Heart left ventricle (tissue), 16 donors: ENCODE measurements at regions of chr16 and their contacts with region 1.

Region 1: DNA sequence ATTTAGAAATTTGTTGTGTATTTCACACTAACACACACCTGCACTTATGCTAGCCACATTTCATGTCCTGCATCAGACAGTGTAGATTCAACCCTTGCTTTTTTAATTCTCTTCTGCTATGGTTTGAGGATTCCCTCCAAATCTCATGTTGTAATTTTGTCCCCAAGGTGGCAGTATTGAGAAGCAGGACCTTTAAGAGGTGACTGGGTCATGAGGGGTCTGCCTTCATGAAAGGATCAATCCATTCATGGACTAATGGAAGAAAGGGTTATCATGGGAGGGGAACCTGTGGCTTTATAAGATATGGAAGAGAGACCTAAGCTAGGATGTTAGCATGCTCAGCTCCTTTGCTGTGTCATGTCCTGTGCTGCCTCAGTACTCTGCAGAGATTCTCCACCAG is 1032.2 kb downstream of the CDH11 start:
- DNase-seq: no peak
- ATAC-seq: peak in 3 of 4 donors; percentile 39 to 41 (median 39)
- H3K4me3 ChIP-seq: no peak overlapping the region
- H3K27ac ChIP-seq: no peak overlapping the region
- H3K4me1 ChIP-seq: no peaks in the 10 kb centered on the region
- H3K27me3 ChIP-seq: no peaks in the 10 kb centered on the region
- CTCF ChIP-seq: peak; percentile 25 to 71 (median 54)
- POLR2A ChIP-seq: no peak

Region 2: DNA sequence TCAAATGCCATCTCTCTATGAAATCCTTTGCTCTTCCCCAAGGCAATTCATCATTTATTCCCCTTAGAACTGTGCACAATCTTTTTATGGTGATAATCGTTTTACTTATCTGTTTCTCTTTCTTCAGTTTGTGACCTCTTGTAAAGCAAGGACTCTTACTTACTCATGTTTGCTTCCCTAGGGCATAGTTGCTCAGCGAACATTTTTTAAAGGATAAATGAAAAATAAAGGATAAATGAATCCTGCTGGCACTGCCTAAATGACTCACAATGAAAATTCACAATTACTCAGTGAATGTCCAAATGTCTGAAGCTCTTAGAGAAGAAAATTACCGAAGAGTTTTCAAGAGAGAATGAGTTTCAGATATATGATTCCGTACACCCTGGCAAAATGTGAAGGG is 360.5 kb after region 1 on chr16:
- intact Hi-C with region 1: loop called in 8 of 10 experiments (anchors 2 to 10 kb)
- DNase-seq: no peak
- ATAC-seq: no peak
- H3K4me3 ChIP-seq: no peak overlapping the region
- H3K27ac ChIP-seq: no peak overlapping the region
- H3K4me1 ChIP-seq: peaks cover 0 to 6% (median 0%) of the 10 kb centered on the region in 12 donors
- H3K27me3 ChIP-seq: no peaks in the 10 kb centered on the region
- CTCF ChIP-seq: no peak
- POLR2A ChIP-seq: no peak

Region 3: GRCh38 chr16:64455254-64455653 is 365.6 kb after region 1 on chr16:
- intact Hi-C with region 1: loop called in 8 of 10 experiments (anchors 2 to 10 kb)
- DNase-seq: no peak
- ATAC-seq: no peak
- H3K4me3 ChIP-seq: no peak overlapping the region
- H3K27ac ChIP-seq: no peak overlapping the region
- H3K4me1 ChIP-seq: peaks cover 0 to 2% (median 0%) of the 10 kb centered on the region in 12 donors
- H3K27me3 ChIP-seq: no peaks in the 10 kb centered on the region
- CTCF ChIP-seq: peak in 9 of 12 donors; percentile 17 to 48 (median 39)
- POLR2A ChIP-seq: no peak

Region 4: DNA sequence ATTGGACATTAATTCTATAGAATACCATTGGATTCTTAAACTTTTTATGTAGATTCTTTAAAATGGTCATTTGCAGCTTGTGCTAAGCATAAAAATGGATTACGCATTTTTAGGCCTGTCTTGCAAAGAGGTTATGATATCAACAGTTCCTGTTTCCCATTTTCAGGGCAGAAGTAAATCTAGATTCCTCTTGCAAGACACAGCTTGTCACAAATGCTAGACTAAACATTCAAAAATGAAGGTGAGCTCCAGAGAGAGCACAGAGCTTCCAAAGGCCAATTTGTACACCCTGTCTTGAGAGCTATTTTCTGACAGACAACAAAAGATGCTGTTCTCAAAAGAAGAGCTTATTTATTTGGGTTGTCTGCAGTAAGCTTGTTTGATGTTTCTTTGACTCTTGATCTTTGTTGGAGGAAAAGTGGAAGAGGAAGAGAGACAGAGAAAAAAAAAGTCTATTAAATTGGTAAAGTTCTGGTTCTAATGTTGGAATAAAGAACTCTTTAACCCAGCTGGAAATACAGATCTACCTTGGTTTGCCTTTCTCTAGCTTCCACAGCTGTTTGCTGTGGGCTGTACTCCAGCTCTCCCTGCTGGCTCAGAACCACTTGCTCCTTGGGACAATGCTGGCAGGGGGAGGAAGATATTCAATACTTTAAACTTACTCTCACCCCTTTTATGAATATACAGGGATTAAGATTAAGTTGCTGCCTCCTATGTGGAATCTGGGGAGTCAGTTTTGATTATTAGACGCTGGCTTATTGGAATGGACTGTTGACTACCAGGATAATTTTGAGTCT is 380.4 kb after region 1 on chr16:
- intact Hi-C with region 1: loop called in 1 of 10 experiments (anchors 5 kb)
- DNase-seq: peak in 3 of 5 donors; percentile 20 to 48 (median 39)
- ATAC-seq: peak; percentile 37 to 83 (median 62)
- H3K4me3 ChIP-seq: no peak overlapping the region
- H3K27ac ChIP-seq: no peak overlapping the region
- H3K4me1 ChIP-seq: peaks cover 0 to 12% (median 2%) of the 10 kb centered on the region in 12 donors
- H3K27me3 ChIP-seq: no peaks in the 10 kb centered on the region
- CTCF ChIP-seq: peak in 8 of 12 donors; percentile 15 to 43 (median 26)
- POLR2A ChIP-seq: no peak